ENCODE measurements at regions of chr6 and their contacts with region 1.

Region 1: GRCh38 chr6:3209114-3210023 is 18.1 kb downstream of the TUBB2B start:
- DNase-seq: no peak
- H3K4me3 ChIP-seq: no peak overlapping the region
- H3K27ac ChIP-seq: no peak overlapping the region
- H3K4me1 ChIP-seq: no peaks in the 10 kb centered on the region
- H3K27me3 ChIP-seq: no peaks in the 10 kb centered on the region
- CTCF ChIP-seq: no peak
- EP300 ChIP-seq: no peak
- POLR2A ChIP-seq: no peak

Region 2: GRCh38 chr6:2810092-2810671 is 399.2 kb before region 1 on chr6:
- intact Hi-C with region 1: no loop called
- DNase-seq: no peak
- H3K4me3 ChIP-seq: no peak overlapping the region
- H3K27ac ChIP-seq: no peak overlapping the region
- H3K4me1 ChIP-seq: no peaks in the 10 kb centered on the region
- H3K27me3 ChIP-seq: no peaks in the 10 kb centered on the region
- CTCF ChIP-seq: no peak
- EP300 ChIP-seq: no peak
- POLR2A ChIP-seq: no peak

Region 3: GRCh38 chr6:3023663-3024483 is 185.5 kb before region 1 on chr6:
- intact Hi-C with region 1: no loop called
- DNase-seq: peak; percentile 86 to 91 (median 88)
- H3K4me3 ChIP-seq: peak overlapping the region; percentile 23
- H3K27ac ChIP-seq: peak overlapping the region in 1 of 2 donors; percentile 85
- H3K4me1 ChIP-seq: no peaks in the 10 kb centered on the region
- H3K27me3 ChIP-seq: no peaks in the 10 kb centered on the region
- CTCF ChIP-seq: no peak
- EP300 ChIP-seq: no peak
- POLR2A ChIP-seq: peak; percentile 41

Region 4: DNA sequence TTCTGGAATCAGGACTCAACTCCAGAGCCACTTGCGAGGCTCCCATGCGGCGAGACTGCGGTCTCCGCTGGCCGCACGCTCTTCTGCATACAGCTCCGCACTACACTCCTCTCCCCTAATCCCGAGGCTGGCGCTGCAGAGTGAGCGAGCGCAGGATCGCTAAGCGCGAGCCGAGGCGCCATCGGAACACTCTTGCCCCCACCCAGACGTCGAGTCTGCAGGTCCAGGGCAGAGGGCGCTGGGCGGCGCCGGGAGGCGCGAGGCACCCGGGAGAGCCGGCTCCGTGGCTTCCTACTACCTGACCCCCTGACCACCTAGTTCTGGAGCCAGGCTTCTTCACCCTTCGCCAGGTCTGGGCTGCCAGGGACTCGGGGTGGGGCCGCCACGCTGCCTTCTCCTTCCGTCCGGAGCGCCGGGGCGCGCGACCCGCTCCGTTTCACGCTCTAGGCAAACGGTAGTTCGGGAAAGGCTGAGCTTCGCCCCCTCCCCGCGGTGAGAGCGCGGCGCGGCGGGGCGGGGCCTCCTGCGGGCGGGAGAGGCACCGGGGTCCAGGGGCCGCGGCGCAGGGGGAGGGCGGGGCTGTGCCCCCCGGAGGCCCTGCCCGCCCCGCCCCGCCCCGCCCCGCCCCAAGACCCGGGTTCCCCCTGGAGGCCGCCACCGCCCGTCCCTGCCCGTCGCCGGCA is 46.7 kb before region 1 on chr6:
- intact Hi-C with region 1: loop called in 1 of 4 experiments (anchors 10 kb)
- DNase-seq: peak; percentile 33 to 68 (median 59)
- H3K4me3 ChIP-seq: peak overlapping the region; percentile 47
- H3K27ac ChIP-seq: peak overlapping the region in 1 of 2 donors; percentile 48
- H3K4me1 ChIP-seq: peaks cover 3% of the 10 kb centered on the region
- H3K27me3 ChIP-seq: no peaks in the 10 kb centered on the region
- CTCF ChIP-seq: no peak
- EP300 ChIP-seq: no peak
- POLR2A ChIP-seq: no peak